Caco-2 (cell line): ENCODE measurements at regions of chrX and their contacts with region 1.

Region 1: DNA sequence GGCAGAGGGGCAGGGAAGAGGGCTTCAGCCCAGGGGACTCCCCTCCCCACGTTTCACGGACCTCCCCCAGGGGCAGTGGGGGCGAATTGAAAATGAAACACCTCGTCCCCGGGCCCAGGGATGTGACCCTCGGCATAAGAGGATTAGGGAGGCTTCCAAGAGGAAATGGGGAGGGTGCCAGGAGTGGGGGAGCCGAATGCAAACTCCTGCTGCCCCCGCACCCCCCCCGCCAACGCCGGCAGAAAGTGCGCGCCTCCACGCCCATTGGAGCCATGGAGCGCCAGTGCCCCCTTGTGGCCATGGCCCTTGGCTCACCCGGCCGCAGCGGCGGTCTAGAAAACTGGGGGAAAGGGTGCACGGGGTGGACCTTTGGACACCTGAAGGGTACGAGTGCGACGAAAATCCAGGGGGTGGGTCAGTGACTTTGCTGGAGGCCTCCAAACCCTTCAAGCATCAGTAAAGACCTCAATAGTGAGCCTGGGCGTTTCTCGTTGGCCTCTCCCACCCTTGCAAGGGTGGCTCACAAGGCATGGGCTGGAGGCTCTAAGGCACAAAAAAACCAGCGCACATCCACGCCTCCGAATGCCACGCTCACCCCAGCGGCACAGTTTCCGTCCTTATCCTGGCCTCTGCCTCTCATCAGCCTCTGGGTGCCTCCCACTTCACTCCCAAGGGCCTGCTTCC is 120.8 kb upstream of the PJA1 start:
- DNase-seq: peak; percentile 37 to 62
- H3K4me3 ChIP-seq: peak overlapping the region; percentile 8; the same call in 1 of the 2 replicates
- H3K4me3 Mint-ChIP-seq: peak overlapping the region; percentile 51
- H3K27ac Mint-ChIP-seq: no peak overlapping the region
- H3K4me1 ChIP-seq: no peaks in the 10 kb centered on the region
- H3K4me1 Mint-ChIP-seq: no peaks in the 10 kb centered on the region
- H3K27me3 ChIP-seq: no peaks in the 10 kb centered on the region
- H3K27me3 Mint-ChIP-seq: no peaks in the 10 kb centered on the region
- CTCF ChIP-seq: peak; percentile 67 to 68

Region 2: DNA sequence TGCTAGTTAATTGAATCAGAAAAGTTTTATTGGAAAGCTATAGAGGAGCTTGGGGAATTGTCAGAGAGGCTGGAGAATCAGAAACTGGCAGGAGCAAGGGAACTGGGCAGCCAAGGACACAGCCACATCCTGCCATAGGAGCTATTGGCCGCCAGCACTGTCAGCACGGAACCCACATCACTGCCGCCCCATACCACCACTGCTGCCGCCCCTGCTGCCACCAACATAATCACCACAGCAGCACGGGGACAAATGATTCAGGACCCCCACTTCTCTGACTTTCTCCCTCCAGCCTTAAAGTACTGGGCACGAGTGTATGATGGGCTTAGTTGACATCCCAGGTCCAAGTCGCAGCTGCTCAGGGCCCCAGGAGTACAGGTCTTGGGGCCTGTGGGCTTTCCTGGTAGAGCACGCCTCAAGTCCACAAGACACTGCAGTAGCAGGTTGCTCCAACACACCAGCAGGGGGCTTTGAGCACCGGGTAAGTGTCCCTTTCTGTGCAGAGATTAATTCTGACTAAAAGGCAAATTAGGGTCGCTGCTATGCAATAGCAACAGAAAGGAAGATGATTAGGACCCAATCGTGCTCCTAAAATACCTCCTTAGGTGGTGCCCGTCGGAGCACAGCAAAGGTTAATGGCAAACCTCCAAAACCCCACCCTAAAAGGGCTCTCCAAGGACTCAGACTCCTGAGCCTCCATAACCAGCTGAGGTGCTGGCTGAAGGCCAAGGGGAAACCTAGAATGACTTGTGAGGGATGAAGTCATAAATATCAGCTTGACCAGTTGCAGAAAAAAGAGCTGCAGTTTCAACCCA is 127.7 kb before region 1 on chrX:
- CTCF ChIA-PET with region 1: no interaction called
- POLR2A ChIA-PET with region 1: no interaction called
- intact Hi-C with region 1: loop called (anchors 2 kb)
- DNase-seq: peak; percentile 38 to 47
- H3K4me3 ChIP-seq: no peak overlapping the region
- H3K4me3 Mint-ChIP-seq: no peak overlapping the region
- H3K27ac Mint-ChIP-seq: no peak overlapping the region
- H3K4me1 ChIP-seq: no peaks in the 10 kb centered on the region
- H3K4me1 Mint-ChIP-seq: no peaks in the 10 kb centered on the region
- H3K27me3 ChIP-seq: no peaks in the 10 kb centered on the region
- H3K27me3 Mint-ChIP-seq: no peaks in the 10 kb centered on the region
- CTCF ChIP-seq: peak; percentile 40 to 61